ENCODE measurements at regions of chr9 and their contacts with region 1.

Region 1: GRCh38 chr9:34603610-34604231 is 8.2 kb downstream of the RPP25L start:
- DNase-seq: peak; percentile 59 to 87 (median 80)
- ATAC-seq: peak; percentile 98
- H3K4me3 ChIP-seq: no peak overlapping the region
- H3K4me3 Mint-ChIP-seq: no peak overlapping the region
- H3K27ac ChIP-seq: no peak overlapping the region
- H3K27ac Mint-ChIP-seq: no peak overlapping the region
- H3K4me1 ChIP-seq: no peaks in the 10 kb centered on the region
- H3K4me1 Mint-ChIP-seq: no peaks in the 10 kb centered on the region
- H3K27me3 ChIP-seq: no peaks in the 10 kb centered on the region
- H3K27me3 Mint-ChIP-seq: peaks cover 3% of the 10 kb centered on the region
- CTCF ChIP-seq: peak; percentile 92

Region 2: GRCh38 chr9:34500623-34501267 is 103.0 kb before region 1 on chr9:
- CTCF ChIA-PET with region 1: interaction called, 4 read pairs
- POLR2A ChIA-PET with region 1: no interaction called
- intact Hi-C with region 1: loop called in 1 of 2 experiments (anchors 5 kb)
- DNase-seq: peak; percentile 52 to 84 (median 73)
- ATAC-seq: peak; percentile 97
- H3K4me3 ChIP-seq: no peak overlapping the region
- H3K4me3 Mint-ChIP-seq: no peak overlapping the region
- H3K27ac ChIP-seq: no peak overlapping the region
- H3K27ac Mint-ChIP-seq: no peak overlapping the region
- H3K4me1 ChIP-seq: no peaks in the 10 kb centered on the region
- H3K4me1 Mint-ChIP-seq: no peaks in the 10 kb centered on the region
- H3K27me3 ChIP-seq: no peaks in the 10 kb centered on the region
- H3K27me3 Mint-ChIP-seq: peaks cover 10% of the 10 kb centered on the region
- CTCF ChIP-seq: peak; percentile 91

Region 3: DNA sequence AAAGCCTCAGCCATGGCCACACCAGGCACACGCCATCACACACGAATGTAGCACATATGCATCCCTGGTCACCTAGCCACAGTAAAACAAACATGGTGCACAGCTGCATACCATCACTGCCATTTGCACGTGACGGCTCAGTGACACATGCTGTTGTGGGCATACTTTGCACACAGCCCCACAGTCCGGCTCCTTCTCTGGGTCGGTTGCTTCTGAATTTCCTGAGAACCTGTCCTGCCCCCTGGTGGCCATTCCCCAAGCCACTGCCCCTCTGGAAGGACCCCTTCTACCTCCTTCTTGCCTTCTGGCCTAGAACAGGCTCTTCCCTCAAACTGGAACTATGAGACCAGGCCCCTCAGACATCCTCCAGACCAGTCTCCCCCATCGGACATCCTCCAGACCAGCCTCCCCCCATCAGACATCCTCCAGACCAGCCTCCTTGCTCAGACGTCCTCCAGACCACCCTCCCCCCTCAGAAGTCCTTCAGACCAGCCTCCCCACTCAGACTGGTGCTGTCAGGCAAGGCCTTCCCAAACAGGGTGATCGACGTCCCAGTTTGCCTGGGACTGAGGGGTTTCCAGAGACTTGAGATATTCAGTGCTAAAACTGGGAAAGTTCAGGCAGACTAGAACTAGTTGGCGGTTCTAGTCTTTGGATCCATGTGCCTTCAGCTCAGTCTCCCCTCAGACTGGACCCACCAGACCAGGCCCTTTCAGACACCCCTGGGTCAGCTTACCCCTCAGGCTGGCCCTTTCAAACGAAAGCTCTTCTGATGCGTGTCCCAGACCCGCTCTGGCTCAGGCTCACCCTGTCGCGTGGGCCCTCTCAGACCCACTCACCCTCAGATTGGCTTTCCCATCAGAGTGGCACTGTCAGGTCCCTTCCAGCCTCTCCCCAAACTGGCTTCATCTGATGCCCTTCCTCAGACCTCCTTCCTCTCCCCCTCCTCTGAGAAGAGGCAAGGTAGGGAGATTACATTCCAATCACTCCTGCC is 56.6 kb before region 1 on chr9:
- CTCF ChIA-PET with region 1: interaction called, 4 read pairs
- POLR2A ChIA-PET with region 1: no interaction called
- intact Hi-C with region 1: loop called in 1 of 2 experiments (anchors 1 kb)
- DNase-seq: peak in 7 of 9 experiments; percentile 22 to 55 (median 48)
- ATAC-seq: peak; percentile 56
- H3K4me3 ChIP-seq: no peak overlapping the region
- H3K4me3 Mint-ChIP-seq: no peak overlapping the region
- H3K27ac ChIP-seq: no peak overlapping the region
- H3K27ac Mint-ChIP-seq: no peak overlapping the region
- H3K4me1 ChIP-seq: no peaks in the 10 kb centered on the region
- H3K4me1 Mint-ChIP-seq: no peaks in the 10 kb centered on the region
- H3K27me3 ChIP-seq: no peaks in the 10 kb centered on the region
- H3K27me3 Mint-ChIP-seq: peaks cover 22% of the 10 kb centered on the region
- CTCF ChIP-seq: peak; percentile 31

Region 4: DNA sequence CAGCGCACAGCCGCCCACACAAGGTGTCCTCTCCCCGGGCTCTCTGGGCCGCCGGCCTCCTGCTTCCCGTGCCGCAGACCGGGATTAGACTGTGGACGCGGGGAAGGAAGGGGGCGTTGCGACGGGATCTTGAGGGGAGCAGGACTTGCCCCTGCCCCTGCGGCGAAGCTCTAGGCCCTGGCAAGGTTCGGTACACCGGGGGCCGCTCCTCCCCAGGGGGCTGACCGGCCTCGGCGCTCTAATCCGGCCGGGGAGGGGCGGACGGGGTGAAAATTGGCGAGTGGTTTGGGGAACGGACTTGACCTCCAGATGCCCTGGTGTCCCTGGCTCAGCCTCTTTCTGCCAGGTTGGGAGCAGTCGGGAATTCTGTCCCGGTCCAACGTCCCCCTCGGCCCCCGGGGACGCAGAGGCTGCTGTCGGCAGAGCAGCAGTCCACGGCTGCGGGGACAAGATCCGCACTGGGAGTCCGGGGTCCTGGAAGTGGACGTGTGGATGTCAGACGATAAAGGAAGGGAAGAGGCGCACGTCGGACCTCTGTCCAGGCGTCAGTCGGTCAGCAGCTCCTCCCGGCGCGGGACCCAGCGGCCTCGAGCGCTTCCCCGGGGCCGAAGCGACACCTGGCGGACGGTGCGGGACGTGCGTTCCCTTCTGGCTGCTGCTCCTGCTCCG is 12.3 kb before region 1 on chr9:
- CTCF ChIA-PET with region 1: interaction called, 14 read pairs
- POLR2A ChIA-PET with region 1: no interaction called
- intact Hi-C with region 1: no loop called
- DNase-seq: peak; percentile 59 to 86 (median 80)
- ATAC-seq: peak; percentile 83
- H3K4me3 ChIP-seq: peak overlapping the region; percentile 54 to 73
- H3K4me3 Mint-ChIP-seq: peak overlapping the region; percentile 78
- H3K27ac ChIP-seq: no peak overlapping the region
- H3K27ac Mint-ChIP-seq: no peak overlapping the region
- H3K4me1 ChIP-seq: peaks cover 9% of the 10 kb centered on the region
- H3K4me1 Mint-ChIP-seq: peaks cover 32% of the 10 kb centered on the region
- H3K27me3 ChIP-seq: peaks cover 26 to 47% of the 10 kb centered on the region in 2 experiments
- H3K27me3 Mint-ChIP-seq: peaks cover 70% of the 10 kb centered on the region
- CTCF ChIP-seq: peak; percentile 74

Region 5: DNA sequence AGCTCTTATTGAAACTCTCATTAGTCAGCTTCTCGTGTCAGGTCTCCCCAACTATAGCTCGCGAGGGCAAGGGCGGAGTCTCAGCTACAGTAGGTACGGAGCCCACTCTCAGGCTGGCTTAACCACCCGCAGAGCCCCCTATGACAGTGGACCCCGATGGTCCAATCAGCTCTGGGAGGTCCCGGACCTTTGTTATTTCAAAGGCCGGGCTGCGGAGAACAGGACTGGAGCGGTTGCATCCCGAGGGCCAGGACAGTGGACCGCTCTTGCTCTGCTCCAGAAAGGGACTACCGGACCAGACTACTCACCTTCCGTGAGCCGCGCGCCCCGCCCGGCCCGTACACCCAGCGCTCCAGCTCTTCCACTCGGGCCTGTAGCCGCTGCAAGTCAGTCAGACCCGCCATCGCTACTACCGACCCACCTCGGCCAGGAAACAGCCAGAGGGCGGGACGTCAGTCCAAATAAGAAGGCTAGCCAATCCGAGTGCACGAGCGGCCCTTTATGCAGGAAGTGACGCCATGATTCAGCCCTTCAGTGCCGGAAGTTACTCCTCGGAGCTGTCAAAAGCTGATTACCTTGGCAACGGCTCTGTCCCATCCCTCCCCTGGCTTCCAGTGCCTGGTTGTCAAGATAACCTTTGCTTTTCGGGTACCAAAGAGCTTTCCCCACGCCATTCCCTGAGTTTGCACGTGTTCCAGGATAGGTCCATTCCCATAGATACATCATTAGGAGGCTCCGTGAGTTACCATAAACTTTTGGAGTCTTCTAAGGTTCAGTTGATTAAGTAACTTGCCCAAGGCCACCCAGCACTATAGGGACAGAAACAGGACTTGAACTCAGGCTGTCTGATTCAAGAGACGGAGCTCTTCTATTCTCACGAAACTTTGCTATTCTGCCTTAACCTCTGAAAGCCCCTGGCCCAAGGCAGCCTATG is 16.6 kb after region 1 on chr9 and contains the start of gene DCTN3:
- CTCF ChIA-PET with region 1: interaction called, 27 read pairs
- POLR2A ChIA-PET with region 1: no interaction called
- intact Hi-C with region 1: no loop called
- DNase-seq: peak; percentile 79 to 97 (median 89)
- ATAC-seq: peak; percentile 98
- H3K4me3 ChIP-seq: peak within 1 kb of the TSS; percentile 85 to 97
- H3K4me3 Mint-ChIP-seq: peak within 1 kb of the TSS; percentile 91
- H3K27ac ChIP-seq: peak within 1 kb of the TSS; percentile 73
- H3K27ac Mint-ChIP-seq: peak within 1 kb of the TSS; percentile 76
- H3K4me1 ChIP-seq: peaks cover 25% of the 10 kb centered on the region
- H3K4me1 Mint-ChIP-seq: peaks cover 34% of the 10 kb centered on the region
- H3K27me3 ChIP-seq: peaks cover 22 to 27% of the 10 kb centered on the region in 2 experiments
- H3K27me3 Mint-ChIP-seq: peaks cover 27% of the 10 kb centered on the region
- CTCF ChIP-seq: no peak
- total RNA-seq, gene DCTN3: 82.8 to 85.3 TPM

Region 6: DNA sequence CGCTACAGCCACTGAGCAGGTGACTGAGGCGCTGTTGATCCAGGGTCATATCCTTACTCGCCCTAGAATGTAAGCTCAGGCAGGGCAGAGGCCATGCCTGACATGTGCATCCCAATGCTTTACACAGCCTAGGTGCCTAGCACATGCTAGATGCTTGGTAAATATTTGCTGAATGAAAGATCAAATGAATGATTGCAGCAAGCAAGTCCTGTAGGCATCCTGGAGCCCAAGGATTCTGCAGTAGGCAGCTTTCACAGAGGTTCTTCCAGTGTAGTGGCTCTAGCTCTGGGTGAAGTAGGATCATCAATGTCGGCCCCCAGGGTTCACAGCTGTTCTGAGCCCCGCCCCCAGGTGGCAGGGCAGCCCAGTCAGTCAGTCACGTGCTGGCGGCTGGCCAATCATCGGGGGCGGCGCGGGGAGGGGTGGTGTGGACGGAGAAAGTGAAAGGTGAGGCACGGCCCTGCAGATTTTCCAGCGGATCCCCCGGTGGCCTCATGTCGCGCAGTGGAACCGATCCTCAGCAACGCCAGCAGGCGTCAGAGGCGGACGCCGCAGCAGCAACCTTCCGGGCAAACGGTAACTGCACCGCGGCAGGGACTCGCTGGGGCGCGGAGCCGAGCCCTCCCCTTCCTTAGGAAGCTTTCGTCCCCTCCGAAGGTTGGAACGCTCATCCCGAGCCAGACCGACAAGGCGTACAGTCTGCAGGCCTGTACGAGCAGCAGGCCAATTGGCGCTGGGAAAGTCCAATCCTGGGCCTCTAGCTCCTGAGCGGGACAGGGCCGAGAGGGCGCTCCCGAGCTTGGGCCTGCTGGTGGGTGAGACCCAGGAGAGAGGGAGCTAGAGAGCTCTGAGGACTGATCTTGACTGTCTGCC is 42.7 kb after region 1 on chr9 and contains the start of gene GALT:
- CTCF ChIA-PET with region 1: no interaction called
- POLR2A ChIA-PET with region 1: no interaction called
- intact Hi-C with region 1: no loop called
- DNase-seq: peak; percentile 90 to 98 (median 97)
- ATAC-seq: peak; percentile 90
- H3K4me3 ChIP-seq: peak within 1 kb of the TSS; percentile 89 to 99
- H3K4me3 Mint-ChIP-seq: peak within 1 kb of the TSS; percentile 95
- H3K27ac ChIP-seq: peak within 1 kb of the TSS; percentile 69 to 80
- H3K27ac Mint-ChIP-seq: peak within 1 kb of the TSS; percentile 89
- H3K4me1 ChIP-seq: peaks cover 27% of the 10 kb centered on the region
- H3K4me1 Mint-ChIP-seq: peaks cover 31% of the 10 kb centered on the region
- H3K27me3 ChIP-seq: no peaks in the 10 kb centered on the region
- H3K27me3 Mint-ChIP-seq: no peaks in the 10 kb centered on the region
- CTCF ChIP-seq: peak; percentile 58
- total RNA-seq, gene GALT: 64.7 to 68.4 TPM

Region 7: DNA sequence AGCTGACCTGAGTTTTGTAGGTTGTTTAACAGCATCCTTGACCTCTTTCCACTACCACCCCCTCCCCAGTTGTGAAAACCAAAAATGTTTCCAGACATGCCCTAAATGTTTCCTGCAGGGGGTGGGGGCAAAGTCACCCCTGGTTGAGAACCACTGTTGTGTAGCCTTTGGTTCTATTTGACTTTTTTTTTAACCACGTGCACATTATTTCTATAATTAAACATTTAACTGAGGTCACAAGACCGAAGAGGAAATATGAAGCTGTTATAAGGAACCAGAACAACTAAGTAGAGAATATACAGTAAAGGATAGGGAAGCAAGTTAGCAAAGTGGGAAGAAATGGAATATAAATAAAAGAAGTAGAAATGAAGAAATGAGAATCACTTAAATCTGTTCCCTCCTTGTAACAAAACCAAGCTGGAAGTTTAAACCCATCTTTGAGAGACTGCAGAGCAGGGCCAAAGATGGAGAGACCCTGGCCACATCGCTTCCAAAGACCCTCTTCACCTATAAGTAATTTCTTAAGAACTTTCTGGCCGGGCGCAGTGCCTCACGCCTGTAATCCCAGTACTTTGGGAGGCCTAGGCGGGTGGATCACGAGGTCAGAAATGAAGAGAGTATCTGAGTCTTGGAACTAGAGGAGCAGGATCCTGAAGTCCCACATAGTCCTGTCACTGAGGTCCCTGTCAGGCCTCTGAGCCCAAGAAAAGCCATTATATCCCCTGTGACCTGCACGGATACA is 1032.6 kb after region 1 on chr9:
- CTCF ChIA-PET with region 1: no interaction called
- POLR2A ChIA-PET with region 1: no interaction called
- intact Hi-C with region 1: no loop called
- DNase-seq: peak in 1 of 9 experiments; percentile 22
- ATAC-seq: no peak
- H3K4me3 ChIP-seq: no peak overlapping the region
- H3K4me3 Mint-ChIP-seq: no peak overlapping the region
- H3K27ac ChIP-seq: peak overlapping the region in 1 of 2 experiments; percentile 56
- H3K27ac Mint-ChIP-seq: peak overlapping the region; percentile 41
- H3K4me1 ChIP-seq: peaks cover 31% of the 10 kb centered on the region
- H3K4me1 Mint-ChIP-seq: peaks cover 51% of the 10 kb centered on the region
- H3K27me3 ChIP-seq: no peaks in the 10 kb centered on the region
- H3K27me3 Mint-ChIP-seq: no peaks in the 10 kb centered on the region
- CTCF ChIP-seq: no peak

Measured in CD8-positive, alpha-beta T cell (primary cell).